Mammary epithelial cell (primary cell): ENCODE measurements at regions of chr11 and their contacts with region 1.

Region 1: GRCh38 chr11:14443638-14444037 is 56.0 kb downstream of the COPB1 start:
- DNase-seq: peak; percentile 64
- H3K4me3 ChIP-seq: no peak overlapping the region
- H3K27ac ChIP-seq: no peak overlapping the region
- H3K4me1 ChIP-seq: peaks cover 36% of the 10 kb centered on the region
- H3K27me3 ChIP-seq: no peaks in the 10 kb centered on the region
- CTCF ChIP-seq: no peak

Region 2: GRCh38 chr11:14288189-14288935 is 155.3 kb before region 1 on chr11:
- CTCF ChIA-PET with region 1: no interaction called
- dilution Hi-C with region 1: no loop called
- in situ Hi-C with region 1: loop called in 1 of 2 experiments (anchors 10 kb)
- intact Hi-C with region 1: no loop called
- DNase-seq: no peak
- H3K4me3 ChIP-seq: no peak overlapping the region
- H3K27ac ChIP-seq: peak overlapping the region; percentile 16
- H3K4me1 ChIP-seq: no peaks in the 10 kb centered on the region
- H3K27me3 ChIP-seq: no peaks in the 10 kb centered on the region
- CTCF ChIP-seq: no peak

Region 3: DNA sequence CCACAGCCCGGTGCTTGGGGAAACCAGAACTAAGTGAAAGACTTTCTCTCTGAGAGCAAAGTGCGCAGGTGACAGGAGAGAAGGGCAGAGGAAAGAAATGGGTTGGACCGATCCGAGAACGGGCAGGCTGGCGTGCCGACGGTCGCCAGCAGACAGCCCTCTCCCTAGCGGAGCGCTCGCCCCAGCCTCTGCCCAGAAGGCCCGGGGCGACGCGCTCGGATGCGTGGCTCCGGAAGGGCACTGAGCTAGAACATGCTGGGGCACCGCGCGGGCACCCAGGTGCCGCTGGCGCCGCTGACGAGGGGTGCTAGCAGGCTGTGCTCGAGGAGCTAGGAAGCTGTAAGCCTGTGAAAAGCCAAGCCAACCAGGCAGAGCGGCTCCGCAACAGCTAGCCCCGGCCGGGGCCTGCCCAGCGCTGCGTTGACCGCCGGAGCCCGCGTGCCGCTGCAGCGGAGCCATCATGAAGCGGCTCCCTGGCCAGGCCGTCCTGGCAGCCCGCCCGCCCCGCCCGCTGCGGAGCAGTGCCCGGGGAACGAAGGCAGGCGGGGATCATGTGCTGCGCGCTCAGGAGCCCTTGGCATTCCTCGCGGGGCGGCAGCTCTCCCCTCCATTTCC is 62.6 kb before region 1 on chr11:
- CTCF ChIA-PET with region 1: no interaction called
- dilution Hi-C with region 1: no loop called
- in situ Hi-C with region 1: no loop called
- intact Hi-C with region 1: loop called (anchors 2 kb)
- DNase-seq: peak; percentile 68
- H3K4me3 ChIP-seq: peak overlapping the region; percentile 38 to 50 (median 46)
- H3K27ac ChIP-seq: peak overlapping the region; percentile 36
- H3K4me1 ChIP-seq: peaks cover 35% of the 10 kb centered on the region
- H3K27me3 ChIP-seq: no peaks in the 10 kb centered on the region
- CTCF ChIP-seq: no peak

Region 4: DNA sequence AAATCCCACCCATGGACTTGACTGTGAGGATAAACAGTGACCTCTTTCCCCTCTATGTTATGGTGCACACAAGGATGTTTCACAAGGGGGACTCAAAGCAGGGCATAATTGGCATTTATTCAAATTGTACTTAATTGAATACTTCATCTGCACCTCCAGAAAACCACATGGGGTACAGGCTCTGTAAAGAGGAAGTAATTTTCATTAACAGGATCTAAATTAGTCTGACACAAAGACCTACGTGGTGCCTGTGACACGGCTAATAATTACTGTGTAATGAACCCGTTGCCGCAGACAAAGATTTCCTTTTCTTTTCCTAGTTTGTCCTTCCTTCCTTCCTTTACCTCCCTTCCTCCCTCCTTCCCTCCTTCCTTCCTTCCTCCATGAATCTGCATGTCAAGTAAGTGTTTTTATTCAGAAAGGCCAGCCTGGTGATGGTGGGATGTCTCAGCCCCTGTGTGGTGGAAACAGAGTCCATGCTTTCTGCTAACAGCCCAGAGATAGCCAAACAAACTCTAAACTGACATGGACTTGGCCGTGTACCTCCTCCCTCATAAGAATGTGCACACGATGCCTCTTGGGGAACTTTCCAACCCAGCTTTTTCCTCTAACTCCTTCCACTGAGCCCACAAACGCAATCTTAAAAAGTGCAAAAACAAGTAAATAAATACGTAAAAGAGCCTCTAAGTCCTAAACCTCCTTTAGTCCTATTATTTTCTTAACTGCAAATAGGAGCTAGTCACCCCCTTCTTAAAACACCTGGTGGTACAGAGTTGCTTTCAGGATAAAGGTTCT is 789.9 kb after region 1 on chr11:
- CTCF ChIA-PET with region 1: no interaction called
- dilution Hi-C with region 1: no loop called
- in situ Hi-C with region 1: no loop called
- intact Hi-C with region 1: no loop called
- DNase-seq: no peak
- H3K4me3 ChIP-seq: no peak overlapping the region
- H3K27ac ChIP-seq: no peak overlapping the region
- H3K4me1 ChIP-seq: no peaks in the 10 kb centered on the region
- H3K27me3 ChIP-seq: no peaks in the 10 kb centered on the region
- CTCF ChIP-seq: no peak